ENCODE measurements at regions of chr16 and their contacts with region 1.

Region 1: DNA sequence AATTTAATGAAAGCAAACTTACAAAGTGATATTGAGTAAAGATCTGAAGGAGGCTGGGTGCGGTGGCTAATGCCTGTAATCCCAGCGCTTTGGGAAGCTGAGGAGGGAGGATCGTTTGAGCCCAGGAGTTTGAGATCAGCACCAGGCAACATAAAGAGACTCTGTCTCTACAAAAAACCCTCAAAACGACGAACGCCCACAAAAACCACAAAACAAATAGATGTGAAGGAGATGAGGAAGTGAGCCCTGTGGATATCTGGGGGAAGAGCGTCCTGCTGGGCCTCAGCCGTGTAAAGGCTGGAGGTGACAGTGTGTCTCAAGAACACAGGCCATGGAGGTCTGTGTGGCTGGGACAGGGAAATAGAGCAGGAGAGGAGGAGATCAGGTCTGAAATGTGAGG is 68.8 kb downstream of the ITFG1 start:
- DNase-seq: peak; percentile 8
- H3K4me3 ChIP-seq: no peak overlapping the region
- H3K27ac ChIP-seq: no peak overlapping the region
- H3K4me1 ChIP-seq: peaks cover 6% of the 10 kb centered on the region
- CTCF ChIP-seq: no peak

Region 2: DNA sequence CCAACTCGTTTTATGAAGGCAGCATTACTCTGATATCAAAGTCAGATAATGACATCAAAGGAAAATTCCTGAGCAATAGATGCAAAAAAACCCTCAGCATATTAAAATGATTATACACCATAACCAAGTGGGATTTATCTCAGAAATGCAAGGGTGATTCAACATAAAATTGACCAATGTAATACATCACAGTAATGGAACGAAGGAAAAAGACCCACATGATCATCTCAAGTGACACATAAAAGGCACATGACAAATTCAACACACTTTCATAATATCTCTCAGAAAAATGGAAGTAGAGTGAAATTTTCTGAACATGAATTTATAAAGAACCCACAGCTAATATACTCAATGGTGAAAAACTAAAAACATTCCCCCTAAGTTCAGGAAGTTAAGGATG is 50.0 kb before region 1 on chr16:
- CTCF ChIA-PET with region 1: no interaction called
- POLR2A ChIA-PET with region 1: no interaction called
- intact Hi-C with region 1: loop called (anchors 10 kb)
- DNase-seq: no peak
- H3K4me3 ChIP-seq: no peak overlapping the region
- H3K27ac ChIP-seq: no peak overlapping the region
- H3K4me1 ChIP-seq: no peaks in the 10 kb centered on the region
- CTCF ChIP-seq: no peak

Measured in OCI-LY7 (cell line).